ENCODE measurements at regions of chr18 and their contacts with region 1.

Region 1: DNA sequence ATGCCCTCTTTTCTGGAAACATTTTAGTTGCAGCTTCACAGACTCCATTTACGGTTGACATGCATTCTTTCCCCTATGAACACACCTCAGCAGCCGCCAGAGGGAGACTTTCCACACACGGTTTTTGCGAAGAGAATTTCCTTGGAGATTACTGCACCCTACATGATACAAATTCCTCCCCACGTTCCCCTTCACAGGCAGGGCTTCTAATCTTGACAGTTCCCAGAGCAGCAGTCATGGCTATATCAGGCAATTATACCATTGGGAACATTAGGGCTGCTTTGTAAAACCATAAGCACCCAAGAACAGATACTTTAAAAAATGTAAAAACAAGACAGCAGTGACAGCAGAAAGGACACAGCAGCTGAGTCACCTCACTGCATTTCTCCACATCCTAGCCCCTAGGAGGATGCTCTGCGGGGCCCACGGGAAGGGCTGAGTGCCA is 253.8 kb downstream of the TGIF1 start:
- DNase-seq: peak; percentile 45 to 58
- H3K4me3 ChIP-seq: no peak overlapping the region
- H3K27ac ChIP-seq: no peak overlapping the region
- H3K4me1 ChIP-seq: no peaks in the 10 kb centered on the region
- H3K27me3 ChIP-seq: no peaks in the 10 kb centered on the region
- CTCF ChIP-seq: peak; percentile 77

Region 2: GRCh38 chr18:3329471-3329870 is 374.3 kb before region 1 on chr18:
- CTCF ChIA-PET with region 1: interaction called, 13 read pairs
- POLR2A ChIA-PET with region 1: no interaction called
- intact Hi-C with region 1: no loop called
- DNase-seq: peak; percentile 33 to 43
- H3K4me3 ChIP-seq: no peak overlapping the region
- H3K27ac ChIP-seq: peak overlapping the region; percentile 34
- H3K4me1 ChIP-seq: peaks cover 21% of the 10 kb centered on the region
- H3K27me3 ChIP-seq: no peaks in the 10 kb centered on the region
- CTCF ChIP-seq: no peak

Region 3: DNA sequence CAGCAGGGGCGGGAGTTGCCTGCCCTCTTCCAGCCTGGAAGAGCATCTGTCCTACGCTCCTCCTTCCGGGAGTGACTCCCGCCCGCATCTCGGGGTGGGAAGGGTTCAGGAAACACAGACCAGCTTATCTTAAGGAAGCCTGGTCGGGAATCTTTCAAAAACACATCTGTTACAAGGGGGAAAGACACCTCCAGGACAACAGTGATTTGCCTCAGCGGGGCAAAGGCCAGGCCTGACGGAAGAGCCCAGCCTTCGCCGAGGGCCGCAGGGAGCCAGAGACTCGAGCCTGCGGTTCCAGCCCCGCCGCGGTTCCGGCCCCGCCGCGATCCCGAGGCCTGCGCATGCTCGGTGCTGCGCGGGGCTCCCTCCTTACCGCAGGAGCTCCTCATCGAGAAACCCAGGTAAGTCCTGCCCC is 291.9 kb before region 1 on chr18:
- CTCF ChIA-PET with region 1: no interaction called
- POLR2A ChIA-PET with region 1: interaction called, 11 read pairs
- intact Hi-C with region 1: no loop called
- DNase-seq: peak; percentile 72 to 86
- H3K4me3 ChIP-seq: peak overlapping the region; percentile 68
- H3K27ac ChIP-seq: peak overlapping the region; percentile 96
- H3K4me1 ChIP-seq: peaks cover 58% of the 10 kb centered on the region
- H3K27me3 ChIP-seq: no peaks in the 10 kb centered on the region
- CTCF ChIP-seq: no peak

Region 4: GRCh38 chr18:3424280-3424890 is 279.4 kb before region 1 on chr18:
- CTCF ChIA-PET with region 1: no interaction called
- POLR2A ChIA-PET with region 1: no interaction called
- intact Hi-C with region 1: no loop called
- DNase-seq: peak in 1 of 2 experiments; percentile 39
- H3K4me3 ChIP-seq: no peak overlapping the region
- H3K27ac ChIP-seq: peak overlapping the region; percentile 33; the same call in 1 of the 2 replicates
- H3K4me1 ChIP-seq: peaks cover 19% of the 10 kb centered on the region
- H3K27me3 ChIP-seq: no peaks in the 10 kb centered on the region
- CTCF ChIP-seq: no peak

Region 5: DNA sequence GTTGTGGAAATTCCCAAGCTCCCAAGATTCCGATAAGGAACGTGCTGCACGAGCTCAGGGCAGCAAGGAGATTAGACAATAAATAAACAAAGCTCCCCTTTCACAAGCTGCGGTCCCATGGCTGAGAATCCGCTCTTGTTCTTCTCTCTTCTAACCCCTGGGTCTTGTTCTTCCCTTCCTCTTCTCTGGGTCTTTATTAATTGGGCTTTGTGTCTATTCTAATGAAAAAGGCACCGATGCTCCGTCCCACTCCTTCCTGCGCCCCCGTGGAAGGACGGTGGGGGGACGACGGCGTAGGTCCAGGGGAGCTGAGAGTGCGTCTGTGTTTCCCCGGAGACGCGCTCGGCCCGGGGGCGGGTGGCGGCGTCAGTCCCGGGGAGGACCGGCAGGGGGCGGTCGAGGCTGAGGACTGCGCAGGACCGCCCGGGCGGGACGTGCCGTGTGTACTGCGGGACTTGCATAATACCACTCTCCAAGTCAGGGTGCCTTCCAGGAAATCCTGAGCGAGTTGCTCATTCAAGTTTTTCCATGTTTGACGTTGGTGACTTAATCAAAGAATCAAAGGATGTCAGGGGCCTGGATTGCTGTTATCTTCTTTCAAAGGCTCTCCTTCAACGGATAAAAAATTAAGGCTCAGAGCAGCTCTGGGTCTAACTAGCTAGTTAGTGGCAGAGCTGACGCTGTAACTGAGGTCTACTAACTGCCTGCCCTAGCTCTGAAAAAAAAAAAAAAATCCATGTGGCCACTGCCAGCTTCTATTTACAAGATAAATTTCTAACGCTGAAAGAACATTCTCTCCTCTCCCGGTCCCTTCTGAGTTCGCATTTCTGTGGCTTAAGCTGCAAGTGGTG is 67.6 kb after region 1 on chr18:
- CTCF ChIA-PET with region 1: interaction called, 7 read pairs
- POLR2A ChIA-PET with region 1: no interaction called
- intact Hi-C with region 1: loop called (anchors 2 kb)
- DNase-seq: peak; percentile 69 to 91
- H3K4me3 ChIP-seq: peak overlapping the region; percentile 51
- H3K27ac ChIP-seq: peak overlapping the region; percentile 13; the same call in 1 of the 2 replicates
- H3K4me1 ChIP-seq: peaks cover 30% of the 10 kb centered on the region
- H3K27me3 ChIP-seq: no peaks in the 10 kb centered on the region
- CTCF ChIP-seq: peak; percentile 92

Region 6: GRCh38 chr18:3869848-3870247 is 166.1 kb after region 1 on chr18:
- CTCF ChIA-PET with region 1: interaction called, 5 read pairs
- POLR2A ChIA-PET with region 1: interaction called, 4 read pairs
- intact Hi-C with region 1: loop called (anchors 2 kb)
- DNase-seq: no peak
- H3K4me3 ChIP-seq: no peak overlapping the region
- H3K27ac ChIP-seq: no peak overlapping the region
- H3K4me1 ChIP-seq: no peaks in the 10 kb centered on the region
- H3K27me3 ChIP-seq: no peaks in the 10 kb centered on the region
- CTCF ChIP-seq: peak; percentile 78

Region 7: GRCh38 chr18:3995476-3996102 is 291.8 kb after region 1 on chr18:
- CTCF ChIA-PET with region 1: interaction called, 4 read pairs
- POLR2A ChIA-PET with region 1: no interaction called
- intact Hi-C with region 1: loop called (anchors 1 kb)
- DNase-seq: peak in 1 of 2 experiments; percentile 45
- H3K4me3 ChIP-seq: no peak overlapping the region
- H3K27ac ChIP-seq: no peak overlapping the region
- H3K4me1 ChIP-seq: no peaks in the 10 kb centered on the region
- H3K27me3 ChIP-seq: no peaks in the 10 kb centered on the region
- CTCF ChIP-seq: peak; percentile 89

Region 8: DNA sequence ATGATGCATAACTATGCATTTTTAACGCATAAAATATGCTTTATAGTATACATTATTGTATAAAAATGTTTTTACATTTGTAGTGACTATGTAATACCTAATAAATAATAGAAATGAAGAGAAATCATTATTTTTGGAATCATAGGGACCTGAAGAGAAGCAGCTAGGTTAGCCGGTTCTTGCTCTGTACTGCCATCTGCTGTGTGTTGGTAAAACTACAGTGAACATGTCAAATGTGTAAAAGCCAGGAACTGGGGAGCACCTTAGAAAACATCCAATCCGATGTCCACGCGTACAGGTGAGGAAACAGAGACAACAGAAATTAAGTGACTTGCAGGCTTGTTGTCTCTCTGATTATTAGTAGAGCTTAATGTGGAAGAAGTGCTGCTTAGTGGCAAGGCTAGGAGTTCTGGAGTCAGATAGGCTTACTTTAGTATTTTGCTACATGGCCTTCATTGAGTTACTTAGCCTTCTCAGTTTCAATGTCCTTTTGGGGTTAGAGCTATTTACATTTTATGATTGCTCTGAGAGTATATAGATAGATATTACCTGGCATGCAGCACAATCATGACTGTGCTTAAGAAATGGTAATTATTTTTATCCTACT is 364.9 kb after region 1 on chr18:
- CTCF ChIA-PET with region 1: no interaction called
- POLR2A ChIA-PET with region 1: no interaction called
- intact Hi-C with region 1: loop called (anchors 10 kb)
- DNase-seq: peak in 1 of 2 experiments; percentile 40
- H3K4me3 ChIP-seq: no peak overlapping the region
- H3K27ac ChIP-seq: no peak overlapping the region
- H3K4me1 ChIP-seq: no peaks in the 10 kb centered on the region
- H3K27me3 ChIP-seq: no peaks in the 10 kb centered on the region
- CTCF ChIP-seq: peak; percentile 86

Measured in PC-9 (cell line).